Activated T-helper 1 cell treated with anti-CD3 and anti-CD28 coated beads, Interleukin-12 subunit alpha, Interleukin-12 subunit beta, Interleukin-2, Interleukin-4 antibody, amounts not matched to agents 30 ng/mL and 10 ng/mL and 1 ng/mL, durations not matched to agents 14 hours and 24 hours and 36 hours (primary cell): ENCODE measurements at regions of chr10 and their contacts with region 1.

Region 1: GRCh38 chr10:4849555-4850242 is 23.7 kb downstream of the AKR1E2 start:
- DNase-seq: peak; percentile 81
- H3K4me3 Mint-ChIP-seq: no peak overlapping the region
- H3K27ac Mint-ChIP-seq: peak overlapping the region; percentile 40
- H3K4me1 Mint-ChIP-seq: peaks cover 20% of the 10 kb centered on the region
- H3K27me3 Mint-ChIP-seq: no peaks in the 10 kb centered on the region

Region 2: GRCh38 chr10:4813023-4813422 is 36.7 kb before region 1 on chr10:
- intact Hi-C with region 1: loop called (anchors 1 kb)
- DNase-seq: no peak
- H3K4me3 Mint-ChIP-seq: no peak overlapping the region
- H3K27ac Mint-ChIP-seq: no peak overlapping the region
- H3K4me1 Mint-ChIP-seq: no peaks in the 10 kb centered on the region
- H3K27me3 Mint-ChIP-seq: peaks cover 10% of the 10 kb centered on the region

Region 3: GRCh38 chr10:4981722-4982471 is 132.2 kb after region 1 on chr10:
- intact Hi-C with region 1: loop called (anchors 1 kb)
- DNase-seq: no peak
- H3K4me3 Mint-ChIP-seq: no peak overlapping the region
- H3K27ac Mint-ChIP-seq: no peak overlapping the region
- H3K4me1 Mint-ChIP-seq: no peaks in the 10 kb centered on the region
- H3K27me3 Mint-ChIP-seq: no peaks in the 10 kb centered on the region

Region 4: DNA sequence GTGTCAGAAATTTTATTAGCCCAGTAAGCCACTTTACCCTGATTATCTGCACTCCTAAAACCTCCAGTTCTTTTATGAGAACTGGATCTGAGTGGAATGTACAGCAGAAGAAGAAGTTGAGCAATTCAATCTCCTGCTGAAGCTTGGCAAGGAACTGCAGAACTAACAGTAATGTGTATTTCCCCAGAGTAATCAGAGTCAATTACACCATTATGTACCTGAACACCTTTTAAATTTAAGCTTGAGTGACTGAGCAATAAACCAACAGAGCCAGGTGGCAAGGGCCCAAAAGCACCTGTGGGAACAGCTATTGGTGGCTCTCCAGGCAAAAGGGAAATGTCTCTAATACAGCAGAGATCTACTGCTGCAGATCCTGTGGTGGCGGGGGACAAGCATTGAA is 194.0 kb after region 1 on chr10:
- intact Hi-C with region 1: no loop called
- DNase-seq: no peak
- H3K4me3 Mint-ChIP-seq: no peak overlapping the region
- H3K27ac Mint-ChIP-seq: no peak overlapping the region
- H3K4me1 Mint-ChIP-seq: no peaks in the 10 kb centered on the region
- H3K27me3 Mint-ChIP-seq: no peaks in the 10 kb centered on the region

Region 5: GRCh38 chr10:5283305-5284158 is 433.8 kb after region 1 on chr10:
- intact Hi-C with region 1: loop called (anchors 1 kb)
- DNase-seq: peak; percentile 59
- H3K4me3 Mint-ChIP-seq: peak overlapping the region; percentile 21
- H3K27ac Mint-ChIP-seq: peak overlapping the region; percentile 90
- H3K4me1 Mint-ChIP-seq: peaks cover 55% of the 10 kb centered on the region
- H3K27me3 Mint-ChIP-seq: no peaks in the 10 kb centered on the region

Region 6: GRCh38 chr10:5434017-5434753 is 584.5 kb after region 1 on chr10:
- intact Hi-C with region 1: loop called (anchors 1 kb)
- DNase-seq: no peak
- H3K4me3 Mint-ChIP-seq: no peak overlapping the region
- H3K27ac Mint-ChIP-seq: peak overlapping the region; percentile 49
- H3K4me1 Mint-ChIP-seq: peaks cover 17% of the 10 kb centered on the region
- H3K27me3 Mint-ChIP-seq: no peaks in the 10 kb centered on the region